AG04449 (cell line): ENCODE measurements at regions of chr1 and their contacts with region 1.

Region 1: GRCh38 chr1:155050560-155051341 is at the start of gene ADAM15:
- DNase-seq: no peak
- H3K4me3 ChIP-seq: peak within 1 kb of the TSS; percentile 71
- CTCF ChIP-seq: peak; percentile 92

Region 2: GRCh38 chr1:154870115-154870571 is 180.6 kb before region 1 on chr1 and contains the start of gene KCNN3:
- CTCF ChIA-PET with region 1: no interaction called
- POLR2A ChIA-PET with region 1: no interaction called
- DNase-seq: no peak
- H3K4me3 ChIP-seq: peak within 1 kb of the TSS; percentile 36
- CTCF ChIP-seq: no peak

Region 3: DNA sequence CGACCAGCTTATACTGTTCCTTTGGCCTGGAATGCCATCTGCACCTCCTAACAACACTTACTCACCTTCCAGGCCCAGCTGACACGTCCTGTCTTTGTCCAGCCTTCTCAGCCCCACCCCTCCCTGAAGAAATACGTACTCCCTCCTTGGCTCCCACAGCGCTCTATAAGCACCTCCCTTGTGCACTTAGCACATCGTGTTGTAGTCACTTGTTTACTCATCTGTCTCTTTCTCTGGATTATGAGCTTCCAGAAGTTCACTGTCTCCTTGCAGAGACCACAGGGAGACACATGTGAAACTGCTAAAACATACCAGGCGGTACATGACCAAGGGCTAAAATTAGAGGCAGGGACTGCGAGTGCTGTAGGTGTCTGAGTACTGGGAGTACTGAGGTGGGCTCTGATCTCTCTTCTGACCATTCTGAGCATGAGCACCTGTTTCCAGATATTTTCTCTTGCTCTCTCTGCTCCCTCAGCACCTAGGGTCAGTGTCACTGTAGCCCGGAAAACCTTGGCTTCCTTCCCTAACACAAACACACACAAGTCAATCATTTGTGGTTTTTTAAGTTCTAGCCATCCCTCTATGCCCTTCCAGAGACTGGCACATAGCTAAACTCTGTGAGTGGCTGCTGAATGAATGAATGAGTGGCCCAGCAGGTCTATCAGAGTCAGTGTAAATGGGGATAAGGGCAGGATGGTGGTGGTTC is 12.0 kb before region 1 on chr1:
- CTCF ChIA-PET with region 1: interaction called, 433 read pairs
- POLR2A ChIA-PET with region 1: no interaction called
- DNase-seq: no peak
- H3K4me3 ChIP-seq: no peak overlapping the region
- CTCF ChIP-seq: no peak

Region 4: GRCh38 chr1:155063550-155064110 is 12.9 kb after region 1 on chr1 and contains the start of gene EFNA4:
- CTCF ChIA-PET with region 1: interaction called, 433 read pairs
- POLR2A ChIA-PET with region 1: no interaction called
- DNase-seq: no peak
- H3K4me3 ChIP-seq: peak within 1 kb of the TSS; percentile 96
- CTCF ChIP-seq: no peak